ENCODE measurements at regions of chr22 and their contacts with region 1.

Region 1: GRCh38 chr22:22959147-22959827 is 71.7 kb downstream of the IGLL5 start:
- DNase-seq: peak; percentile 84
- ATAC-seq: peak; percentile 34
- H3K4me3 Mint-ChIP-seq: no peak overlapping the region
- H3K27ac Mint-ChIP-seq: no peak overlapping the region
- H3K4me1 Mint-ChIP-seq: peaks cover 9% of the 10 kb centered on the region
- H3K27me3 Mint-ChIP-seq: peaks cover 52% of the 10 kb centered on the region
- CTCF ChIP-seq: peak; percentile 83

Region 2: DNA sequence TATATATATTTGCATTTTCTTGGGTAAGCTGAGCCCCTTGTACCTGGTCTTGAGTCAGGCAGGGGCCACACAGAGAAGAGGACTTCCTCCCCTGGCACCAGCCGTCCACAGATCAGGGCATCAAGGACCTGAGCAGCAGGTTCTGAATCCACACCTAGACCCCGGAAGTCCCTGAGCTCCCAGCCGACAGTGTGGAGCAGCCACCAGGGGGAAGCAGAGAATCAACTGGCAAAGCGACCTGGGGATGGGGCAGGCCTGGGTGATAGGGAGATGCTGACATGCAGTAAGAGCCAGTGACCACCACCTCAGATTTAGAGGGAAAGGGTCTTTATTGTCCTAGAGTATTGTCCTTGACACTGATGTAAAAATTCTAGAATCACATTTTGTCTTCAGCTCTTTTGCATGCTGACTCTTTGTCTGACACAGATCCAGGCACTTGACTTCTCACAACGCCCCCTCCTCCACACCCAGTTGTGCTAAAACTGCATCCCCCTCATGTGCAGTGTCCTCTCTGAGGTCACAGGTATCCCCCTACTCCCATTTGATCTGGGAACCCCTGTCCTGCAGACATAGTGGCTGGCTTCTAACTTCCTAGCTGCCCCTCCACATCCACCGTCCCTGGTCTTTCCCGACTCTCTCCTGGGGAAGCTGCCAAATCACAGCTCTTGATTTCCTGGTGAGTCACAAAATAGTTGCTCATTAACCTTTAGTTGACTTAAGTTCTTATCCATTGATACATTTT is 205.6 kb before region 1 on chr22:
- CTCF ChIA-PET with region 1: interaction called, 13 read pairs
- POLR2A ChIA-PET with region 1: no interaction called
- DNase-seq: peak; percentile 83
- ATAC-seq: peak; percentile 97
- H3K4me3 Mint-ChIP-seq: no peak overlapping the region
- H3K27ac Mint-ChIP-seq: no peak overlapping the region
- H3K4me1 Mint-ChIP-seq: no peaks in the 10 kb centered on the region
- H3K27me3 Mint-ChIP-seq: peaks cover 96% of the 10 kb centered on the region
- CTCF ChIP-seq: peak; percentile 33; the same call in 1 of the 2 replicates

Region 3: DNA sequence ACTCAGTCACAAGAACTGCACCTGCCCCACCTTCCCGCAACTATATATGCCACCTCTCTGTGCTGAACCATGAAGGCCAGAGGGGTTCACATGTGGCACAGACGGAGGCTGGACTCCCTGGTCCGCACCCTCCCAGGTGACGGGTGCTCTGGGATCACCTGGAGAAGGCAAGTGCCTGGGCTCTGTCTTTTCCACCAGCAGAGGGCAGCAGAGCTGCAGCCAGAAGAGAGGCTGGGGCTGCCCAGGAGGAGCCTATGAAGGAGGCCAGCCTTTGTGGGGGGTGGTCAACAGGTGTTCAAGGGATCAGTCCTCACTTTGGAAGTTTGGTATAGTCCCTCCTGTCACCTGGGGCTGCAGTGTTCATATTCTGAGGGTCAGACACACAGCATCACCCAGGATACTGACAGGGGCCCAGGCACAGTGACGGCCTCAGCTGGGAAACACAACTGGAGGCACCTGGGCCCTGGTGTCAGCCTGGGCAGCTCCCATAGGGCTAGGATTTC is 110.9 kb before region 1 on chr22:
- CTCF ChIA-PET with region 1: interaction called, 91 read pairs
- POLR2A ChIA-PET with region 1: no interaction called
- DNase-seq: peak; percentile 90
- ATAC-seq: peak; percentile 98
- H3K4me3 Mint-ChIP-seq: no peak overlapping the region
- H3K27ac Mint-ChIP-seq: no peak overlapping the region
- H3K4me1 Mint-ChIP-seq: no peaks in the 10 kb centered on the region; the same call in 1 of the 2 replicates
- H3K27me3 Mint-ChIP-seq: peaks cover 83% of the 10 kb centered on the region
- CTCF ChIP-seq: peak; percentile 82

Region 4: DNA sequence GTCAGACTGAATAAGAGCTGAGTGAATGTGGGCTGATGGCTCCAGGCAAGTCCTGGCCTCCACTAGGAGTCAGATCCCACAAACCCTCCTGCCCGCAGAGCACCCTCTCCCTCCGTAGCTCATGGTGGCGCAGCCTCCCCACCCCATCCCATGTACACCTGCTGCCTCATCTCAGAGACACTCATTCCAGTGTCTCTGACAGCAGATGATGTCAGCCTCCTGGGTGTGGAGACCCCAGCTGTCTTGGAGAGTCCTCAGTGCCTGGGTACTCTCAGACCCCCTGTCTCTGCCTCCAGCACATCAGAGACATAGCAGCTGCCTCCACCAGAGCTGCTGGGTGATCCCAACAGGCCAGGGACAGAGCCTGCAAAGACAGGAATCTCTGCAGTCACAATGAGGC is 62.2 kb before region 1 on chr22:
- CTCF ChIA-PET with region 1: interaction called, 13 read pairs
- POLR2A ChIA-PET with region 1: no interaction called
- DNase-seq: no peak
- ATAC-seq: no peak
- H3K4me3 Mint-ChIP-seq: no peak overlapping the region
- H3K27ac Mint-ChIP-seq: no peak overlapping the region
- H3K4me1 Mint-ChIP-seq: no peaks in the 10 kb centered on the region
- H3K27me3 Mint-ChIP-seq: peaks cover 75% of the 10 kb centered on the region
- CTCF ChIP-seq: no peak

Region 5: DNA sequence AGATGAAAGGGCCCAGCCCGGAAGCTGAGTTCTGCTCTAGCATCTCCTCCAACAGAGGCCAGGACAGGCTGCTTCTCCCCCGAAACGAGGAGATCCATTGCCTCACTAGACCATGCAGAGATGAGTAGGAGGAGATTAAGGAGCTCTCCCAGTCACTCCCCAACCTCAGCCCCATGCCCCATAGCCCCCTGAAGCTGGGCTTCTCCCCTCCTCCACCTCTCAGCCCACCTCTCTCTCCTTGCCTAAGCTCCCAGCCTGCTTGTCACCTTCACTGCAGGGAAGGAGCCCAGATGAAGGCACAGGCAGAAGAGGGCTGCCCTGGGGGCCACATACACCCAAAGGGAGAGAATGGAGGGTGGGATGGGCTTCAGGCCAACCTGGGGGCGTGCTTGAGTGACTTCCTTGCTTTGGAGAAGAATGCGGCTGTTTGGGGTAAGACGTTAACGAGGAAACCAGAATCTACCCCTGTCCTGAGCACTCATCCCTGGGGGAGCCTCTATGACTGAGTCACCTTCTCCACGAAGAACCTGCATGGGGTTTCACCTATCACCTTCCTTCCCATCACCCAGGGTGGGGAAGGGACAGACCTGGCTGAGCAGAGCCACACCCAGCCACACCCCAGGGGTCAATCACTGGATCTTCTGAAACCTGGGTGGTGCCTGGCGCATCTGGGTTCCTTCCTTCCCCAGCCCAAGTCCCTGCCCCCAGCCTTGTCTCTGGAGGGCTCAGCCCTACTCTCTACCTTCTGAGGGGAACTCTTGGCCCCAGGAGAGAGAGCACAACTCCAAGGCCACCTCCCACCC is 99.4 kb after region 1 on chr22:
- CTCF ChIA-PET with region 1: interaction called, 10 read pairs
- POLR2A ChIA-PET with region 1: no interaction called
- DNase-seq: peak; percentile 5
- ATAC-seq: no peak
- H3K4me3 Mint-ChIP-seq: no peak overlapping the region
- H3K27ac Mint-ChIP-seq: no peak overlapping the region
- H3K4me1 Mint-ChIP-seq: no peaks in the 10 kb centered on the region
- H3K27me3 Mint-ChIP-seq: peaks cover 14% of the 10 kb centered on the region
- CTCF ChIP-seq: no peak

Region 6: GRCh38 chr22:23137905-23138561 is 178.7 kb after region 1 on chr22:
- CTCF ChIA-PET with region 1: interaction called, 63 read pairs
- POLR2A ChIA-PET with region 1: no interaction called
- DNase-seq: no peak
- ATAC-seq: no peak
- H3K4me3 Mint-ChIP-seq: no peak overlapping the region
- H3K27ac Mint-ChIP-seq: no peak overlapping the region
- H3K4me1 Mint-ChIP-seq: peaks cover 20% of the 10 kb centered on the region
- H3K27me3 Mint-ChIP-seq: 0 out of 2 replicates have a peak, but pooled peaks cover 3% of the 10 kb centered on the region
- CTCF ChIP-seq: no peak

Measured in WTC11 (cell line).